ENCODE measurements at regions of chr20 and their contacts with region 1.

Region 1: GRCh38 chr20:10357974-10358373 is 76.0 kb downstream of the MKKS start:
- DNase-seq: peak; percentile 28
- H3K4me3 ChIP-seq: no peak overlapping the region
- H3K27ac ChIP-seq: no peak overlapping the region
- H3K4me1 ChIP-seq: peaks cover 8% of the 10 kb centered on the region
- H3K27me3 ChIP-seq: no peaks in the 10 kb centered on the region
- CTCF ChIP-seq: peak; percentile 73

Region 2: DNA sequence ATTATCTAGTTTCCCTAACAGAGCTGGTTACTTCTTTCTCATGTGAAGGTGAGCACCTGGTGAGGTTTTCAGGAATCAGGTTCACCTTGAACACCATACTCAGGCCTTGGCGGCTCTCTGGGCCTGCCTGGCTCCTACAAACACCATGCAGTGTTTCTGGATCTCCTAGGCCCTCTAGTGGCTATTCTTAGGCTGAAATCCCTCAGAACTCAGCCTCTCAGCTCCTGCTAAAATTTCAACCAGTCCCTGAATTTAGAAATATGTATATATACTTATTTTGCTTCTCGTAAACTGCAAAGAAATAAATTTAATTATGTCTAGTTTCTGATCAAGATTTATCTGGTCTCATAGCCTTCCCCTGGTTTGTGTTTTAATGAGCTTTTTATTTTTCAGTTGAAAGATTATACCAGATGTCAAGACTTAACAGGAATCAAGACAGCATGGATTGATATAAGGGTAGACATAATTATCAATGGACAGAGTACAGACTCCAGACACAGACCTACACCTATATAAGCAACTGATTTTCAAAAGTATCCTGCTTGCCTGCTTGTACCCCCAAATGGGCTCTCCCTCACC is 267.3 kb before region 1 on chr20:
- CTCF ChIA-PET with region 1: no interaction called
- POLR2A ChIA-PET with region 1: no interaction called
- intact Hi-C with region 1: loop called (anchors 5 kb)
- DNase-seq: peak; percentile 66
- H3K4me3 ChIP-seq: no peak overlapping the region
- H3K27ac ChIP-seq: no peak overlapping the region
- H3K4me1 ChIP-seq: no peaks in the 10 kb centered on the region
- H3K27me3 ChIP-seq: no peaks in the 10 kb centered on the region
- CTCF ChIP-seq: peak; percentile 79

Region 3: GRCh38 chr20:10219452-10219791 is 138.6 kb before region 1 on chr20:
- CTCF ChIA-PET with region 1: no interaction called
- POLR2A ChIA-PET with region 1: no interaction called
- intact Hi-C with region 1: loop called (anchors 2 kb)
- DNase-seq: peak; percentile 92
- H3K4me3 ChIP-seq: peak overlapping the region; percentile 70
- H3K27ac ChIP-seq: peak overlapping the region; percentile 64
- H3K4me1 ChIP-seq: peaks cover 16% of the 10 kb centered on the region
- H3K27me3 ChIP-seq: peaks cover 17% of the 10 kb centered on the region
- CTCF ChIP-seq: no peak

Region 4: GRCh38 chr20:10419550-10420133 is 61.7 kb after region 1 on chr20:
- CTCF ChIA-PET with region 1: no interaction called
- POLR2A ChIA-PET with region 1: no interaction called
- intact Hi-C with region 1: loop called (anchors 5 kb)
- DNase-seq: no peak
- H3K4me3 ChIP-seq: no peak overlapping the region
- H3K27ac ChIP-seq: no peak overlapping the region
- H3K4me1 ChIP-seq: peaks cover 38% of the 10 kb centered on the region
- H3K27me3 ChIP-seq: no peaks in the 10 kb centered on the region
- CTCF ChIP-seq: no peak

Region 5: DNA sequence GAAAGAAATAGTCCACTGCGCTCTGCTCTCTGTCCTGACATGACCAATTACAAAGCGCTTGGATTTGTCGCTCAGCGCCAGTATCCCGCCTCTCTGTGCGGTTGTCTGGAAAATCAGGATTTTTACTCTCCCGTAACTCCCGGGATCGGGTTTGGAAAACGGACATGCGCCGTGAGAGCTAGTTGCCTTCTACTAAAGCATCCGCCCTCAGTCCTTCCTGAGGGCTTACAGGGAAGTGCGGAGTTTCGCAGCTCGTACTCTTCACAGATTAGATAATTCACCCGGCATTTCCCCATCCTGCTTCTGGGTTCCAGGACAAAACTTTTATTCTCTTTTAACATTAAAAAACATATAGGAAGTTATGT is 76.5 kb after region 1 on chr20:
- CTCF ChIA-PET with region 1: no interaction called
- POLR2A ChIA-PET with region 1: no interaction called
- intact Hi-C with region 1: loop called (anchors 5 kb)
- DNase-seq: peak; percentile 99
- H3K4me3 ChIP-seq: peak overlapping the region; percentile 78
- H3K27ac ChIP-seq: peak overlapping the region; percentile 87
- H3K4me1 ChIP-seq: peaks cover 43% of the 10 kb centered on the region
- H3K27me3 ChIP-seq: no peaks in the 10 kb centered on the region
- CTCF ChIP-seq: no peak

Region 6: GRCh38 chr20:10536531-10536930 is 178.6 kb after region 1 on chr20:
- CTCF ChIA-PET with region 1: no interaction called
- POLR2A ChIA-PET with region 1: no interaction called
- intact Hi-C with region 1: loop called (anchors 5 kb)
- DNase-seq: no peak
- H3K4me3 ChIP-seq: no peak overlapping the region
- H3K27ac ChIP-seq: peak overlapping the region; percentile 48
- H3K4me1 ChIP-seq: peaks cover 47% of the 10 kb centered on the region
- H3K27me3 ChIP-seq: no peaks in the 10 kb centered on the region
- CTCF ChIP-seq: peak; percentile 65

Measured in A673 (cell line).